Activated CD8-positive, alpha-beta memory T cell treated with anti-CD3 and anti-CD28 coated beads, Interleukin-2, amount 10 ng/mL, durations not matched to agents 7 days and 5 days (primary cell): ENCODE measurements at regions of chr12 and their contacts with region 1.

Region 1: DNA sequence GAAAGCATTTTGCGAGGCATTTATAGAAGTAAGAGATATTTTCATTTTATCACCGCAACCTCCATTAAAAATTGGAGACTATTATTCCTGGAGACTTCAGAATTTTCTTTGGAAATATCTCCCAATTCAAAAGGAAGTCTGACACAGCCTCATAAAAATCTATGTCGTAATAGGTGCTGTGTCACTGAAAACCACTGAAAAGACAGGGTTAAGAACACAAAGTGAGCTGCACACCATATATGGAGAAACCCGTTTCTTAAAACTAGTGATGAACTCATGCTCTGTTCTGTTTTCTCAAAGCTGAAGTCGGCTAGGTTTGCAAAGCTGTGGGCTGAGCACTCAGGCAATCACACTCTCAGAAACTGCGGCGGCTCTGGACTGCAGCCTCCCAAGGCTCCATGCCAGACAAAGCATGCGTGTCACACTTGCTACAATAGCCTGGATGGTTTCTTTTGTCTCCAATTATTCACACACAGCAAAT is at the start of gene GLIPR1:
- DNase-seq: peak; percentile 89
- ATAC-seq: peak; percentile 87
- H3K4me3 Mint-ChIP-seq: peak within 1 kb of the TSS; percentile 99
- H3K27ac Mint-ChIP-seq: peak within 1 kb of the TSS; percentile 99
- H3K4me1 Mint-ChIP-seq: peaks cover 69% of the 10 kb centered on the region
- H3K27me3 Mint-ChIP-seq: no peaks in the 10 kb centered on the region
- total RNA-seq, gene GLIPR1: 55.3 to 74.8 TPM

Region 2: GRCh38 chr12:75334384-75335030 is 146.0 kb before region 1 on chr12 and contains the start of gene GLIPR1L1:
- CTCF ChIA-PET with region 1: interaction called, 48 read pairs
- DNase-seq: peak; percentile 90
- ATAC-seq: peak; percentile 84
- H3K4me3 Mint-ChIP-seq: peak within 1 kb of the TSS; percentile 64
- H3K27ac Mint-ChIP-seq: no peak within 1 kb of the TSS
- H3K4me1 Mint-ChIP-seq: peaks cover 34% of the 10 kb centered on the region
- H3K27me3 Mint-ChIP-seq: peaks cover 27% of the 10 kb centered on the region
- total RNA-seq, gene GLIPR1L1: not detected

Region 3: GRCh38 chr12:75390899-75391538 is 89.5 kb before region 1 on chr12 and contains the start of gene GLIPR1L2:
- CTCF ChIA-PET with region 1: interaction called, 57 read pairs
- DNase-seq: peak; percentile 96
- ATAC-seq: peak; percentile 98
- H3K4me3 Mint-ChIP-seq: peak within 1 kb of the TSS; percentile 85
- H3K27ac Mint-ChIP-seq: peak within 1 kb of the TSS; percentile 93
- H3K4me1 Mint-ChIP-seq: peaks cover 41% of the 10 kb centered on the region
- H3K27me3 Mint-ChIP-seq: no peaks in the 10 kb centered on the region
- total RNA-seq, gene GLIPR1L2: not detected

Region 4: GRCh38 chr12:75437564-75437963 is 42.9 kb before region 1 on chr12:
- CTCF ChIA-PET with region 1: interaction called, 33 read pairs
- DNase-seq: no peak
- ATAC-seq: peak; percentile 66
- H3K4me3 Mint-ChIP-seq: no peak overlapping the region
- H3K27ac Mint-ChIP-seq: no peak overlapping the region
- H3K4me1 Mint-ChIP-seq: peaks cover 5% of the 10 kb centered on the region
- H3K27me3 Mint-ChIP-seq: no peaks in the 10 kb centered on the region

Region 5: DNA sequence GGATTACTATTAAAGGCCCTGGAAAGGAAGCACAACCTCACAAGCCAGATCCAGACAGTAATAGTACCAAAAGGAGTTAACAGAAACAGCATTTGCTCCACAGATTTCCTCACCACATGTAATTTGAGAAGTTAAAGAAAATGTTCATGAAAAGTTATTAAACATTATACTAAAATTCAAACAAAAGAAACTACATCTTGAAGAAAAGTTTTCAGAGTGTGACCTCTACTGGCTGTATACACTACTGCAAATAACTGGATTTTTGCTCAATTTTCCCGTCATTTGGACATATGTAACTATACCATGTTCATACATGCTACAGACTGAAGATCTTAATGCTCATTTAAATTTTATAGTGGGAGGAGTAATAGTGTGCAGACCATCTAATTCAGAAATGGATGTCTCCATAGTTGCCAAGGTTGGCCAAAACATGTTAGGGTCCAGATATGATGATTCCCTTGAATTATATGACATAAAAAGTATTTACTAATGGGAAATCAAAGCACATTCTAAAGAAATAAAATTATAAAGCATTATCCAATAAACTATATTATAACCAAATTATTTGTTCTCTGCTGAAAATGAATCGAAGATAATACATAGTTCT is 25.3 kb after region 1 on chr12:
- CTCF ChIA-PET with region 1: interaction called, 51 read pairs
- DNase-seq: no peak
- ATAC-seq: peak; percentile 43
- H3K4me3 Mint-ChIP-seq: no peak overlapping the region
- H3K27ac Mint-ChIP-seq: no peak overlapping the region
- H3K4me1 Mint-ChIP-seq: peaks cover 36% of the 10 kb centered on the region
- H3K27me3 Mint-ChIP-seq: no peaks in the 10 kb centered on the region

Region 6: DNA sequence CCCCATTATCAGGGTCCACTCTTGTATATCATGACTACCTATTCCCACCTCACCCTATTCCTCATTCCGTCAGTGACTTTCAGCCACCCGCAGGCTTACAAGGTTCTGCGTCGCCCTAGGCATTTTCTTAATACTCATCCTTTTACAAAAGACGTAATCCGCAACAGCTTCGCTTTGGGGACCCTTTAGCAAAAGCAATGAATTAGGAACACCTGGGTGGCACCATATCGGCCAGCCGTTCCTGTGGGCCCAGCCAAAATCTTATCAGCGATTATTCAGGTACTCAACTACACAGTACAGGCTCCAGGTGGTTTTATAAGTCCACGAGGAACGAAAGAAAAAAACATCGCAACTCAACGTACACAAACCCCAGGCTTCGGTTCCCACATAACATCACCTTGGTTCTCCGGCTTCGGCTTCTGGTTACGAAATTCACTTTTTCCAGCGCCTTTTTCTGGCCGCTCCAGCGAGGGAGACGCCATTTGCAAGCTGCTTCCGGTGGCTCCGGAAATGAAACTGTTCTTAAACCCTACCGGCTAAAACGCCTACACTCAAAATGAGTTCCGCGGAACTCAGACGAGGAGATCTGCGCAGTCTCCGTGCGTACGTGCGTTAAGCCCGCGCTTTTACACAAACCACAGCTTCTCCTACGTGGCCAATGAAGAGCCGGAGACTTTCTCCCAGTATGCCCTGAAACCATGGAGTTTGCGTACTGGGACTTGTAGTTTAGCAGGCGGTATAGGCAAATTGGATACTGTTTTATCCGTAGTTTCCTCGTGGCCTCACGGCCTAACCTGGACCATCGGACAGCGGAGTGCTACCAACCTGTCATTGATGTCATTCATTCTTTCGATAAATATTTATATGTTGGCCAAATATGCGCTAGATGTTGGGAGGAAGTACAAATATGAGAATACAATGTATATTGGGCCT is 30.9 kb after region 1 on chr12 and contains the start of gene KRR1:
- CTCF ChIA-PET with region 1: interaction called, 21 read pairs
- DNase-seq: peak; percentile 96
- ATAC-seq: peak; percentile 97
- H3K4me3 Mint-ChIP-seq: peak within 1 kb of the TSS; percentile 97
- H3K27ac Mint-ChIP-seq: peak within 1 kb of the TSS; percentile 99
- H3K4me1 Mint-ChIP-seq: peaks cover 34% of the 10 kb centered on the region
- H3K27me3 Mint-ChIP-seq: no peaks in the 10 kb centered on the region
- total RNA-seq, gene KRR1: 68.5 to 97.7 TPM

Region 7: DNA sequence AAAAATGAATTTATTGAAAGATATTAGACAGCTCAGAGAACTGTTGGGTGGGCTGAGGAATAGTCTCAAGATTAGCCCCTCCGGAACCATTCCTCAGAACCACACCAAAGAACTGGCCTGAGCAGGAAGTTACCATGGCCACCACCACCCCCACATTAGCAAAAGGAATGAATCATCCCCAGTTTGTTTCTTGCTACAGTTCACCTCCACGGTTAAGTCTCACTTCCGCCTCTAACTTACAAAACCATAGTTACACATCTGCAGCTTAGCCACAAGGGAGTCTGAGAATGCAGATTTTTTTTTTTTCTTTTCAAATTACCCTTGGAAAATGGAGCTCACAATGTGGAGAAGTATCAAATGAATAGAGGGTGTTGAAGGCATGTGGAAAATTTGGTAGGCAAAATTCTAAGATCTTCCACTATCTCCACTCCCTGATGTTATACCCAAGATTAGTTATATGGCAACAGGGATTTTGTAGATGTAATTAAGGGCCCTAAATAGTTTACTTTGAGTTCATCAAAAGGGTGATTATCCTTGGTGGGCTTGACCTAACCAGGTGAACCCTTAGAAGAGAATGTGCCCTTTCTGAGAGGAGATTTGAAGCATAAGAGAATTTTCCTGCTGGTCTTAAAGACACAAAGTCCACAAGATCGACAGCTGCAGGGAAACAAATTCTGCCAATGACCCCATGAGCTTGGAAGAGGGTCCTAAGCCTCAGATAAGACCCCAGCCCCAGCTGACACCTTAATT is 160.7 kb after region 1 on chr12:
- CTCF ChIA-PET with region 1: no interaction called
- DNase-seq: peak; percentile 89
- ATAC-seq: peak; percentile 96
- H3K4me3 Mint-ChIP-seq: peak overlapping the region; percentile 43
- H3K27ac Mint-ChIP-seq: peak overlapping the region; percentile 88
- H3K4me1 Mint-ChIP-seq: peaks cover 65% of the 10 kb centered on the region
- H3K27me3 Mint-ChIP-seq: peaks cover 2% of the 10 kb centered on the region

Region 8: GRCh38 chr12:76037130-76038103 is 556.9 kb after region 1 on chr12:
- CTCF ChIA-PET with region 1: interaction called, 21 read pairs
- DNase-seq: peak; percentile 55
- ATAC-seq: peak; percentile 79
- H3K4me3 Mint-ChIP-seq: no peak overlapping the region
- H3K27ac Mint-ChIP-seq: no peak overlapping the region
- H3K4me1 Mint-ChIP-seq: peaks cover 36% of the 10 kb centered on the region
- H3K27me3 Mint-ChIP-seq: no peaks in the 10 kb centered on the region